ENCODE measurements at regions of chr11 and their contacts with region 1.

Region 1: GRCh38 chr11:109208121-109208520 is 213.9 kb upstream of the C11orf87 start:
- DNase-seq: no peak
- ATAC-seq: no peak
- H3K4me3 ChIP-seq: no peak overlapping the region
- H3K27ac ChIP-seq: no peak overlapping the region
- H3K4me1 ChIP-seq: no peaks in the 10 kb centered on the region
- H3K27me3 ChIP-seq: no peaks in the 10 kb centered on the region
- CTCF ChIP-seq: no peak
- POLR2A ChIP-seq: no peak
- RAD21 ChIP-seq: no peak

Region 2: GRCh38 chr11:108754901-108755632 is 453.1 kb before region 1 on chr11:
- CTCF ChIA-PET with region 1: no interaction called
- POLR2A ChIA-PET with region 1: no interaction called
- RAD21 ChIA-PET with region 1: no interaction called
- intact Hi-C with region 1: no loop called
- DNase-seq: no peak
- ATAC-seq: no peak
- H3K4me3 ChIP-seq: no peak overlapping the region
- H3K27ac ChIP-seq: no peak overlapping the region
- H3K4me1 ChIP-seq: no peaks in the 10 kb centered on the region
- H3K27me3 ChIP-seq: no peaks in the 10 kb centered on the region
- CTCF ChIP-seq: no peak
- POLR2A ChIP-seq: no peak
- RAD21 ChIP-seq: no peak

Region 3: GRCh38 chr11:109264128-109264527 is 56.0 kb after region 1 on chr11:
- CTCF ChIA-PET with region 1: no interaction called
- POLR2A ChIA-PET with region 1: no interaction called
- RAD21 ChIA-PET with region 1: no interaction called
- intact Hi-C with region 1: loop called (anchors 5 kb)
- DNase-seq: no peak
- ATAC-seq: no peak
- H3K4me3 ChIP-seq: no peak overlapping the region
- H3K27ac ChIP-seq: no peak overlapping the region
- H3K4me1 ChIP-seq: no peaks in the 10 kb centered on the region
- H3K27me3 ChIP-seq: no peaks in the 10 kb centered on the region
- CTCF ChIP-seq: no peak
- POLR2A ChIP-seq: no peak
- RAD21 ChIP-seq: no peak